ENCODE measurements at regions of chr11 and their contacts with region 1.

Region 1: GRCh38 chr11:85941380-85941973 is 86.3 kb downstream of the CCDC83 start:
- DNase-seq: peak in 1 of 2 donors; percentile 74
- H3K4me3 ChIP-seq: no peak overlapping the region
- H3K27ac ChIP-seq: no peak overlapping the region
- H3K4me1 ChIP-seq: peaks cover 0 to 3% of the 10 kb centered on the region in 2 donors
- H3K27me3 ChIP-seq: no peaks in the 10 kb centered on the region
- CTCF ChIP-seq: peak; percentile 67 to 73 (median 70)

Region 2: DNA sequence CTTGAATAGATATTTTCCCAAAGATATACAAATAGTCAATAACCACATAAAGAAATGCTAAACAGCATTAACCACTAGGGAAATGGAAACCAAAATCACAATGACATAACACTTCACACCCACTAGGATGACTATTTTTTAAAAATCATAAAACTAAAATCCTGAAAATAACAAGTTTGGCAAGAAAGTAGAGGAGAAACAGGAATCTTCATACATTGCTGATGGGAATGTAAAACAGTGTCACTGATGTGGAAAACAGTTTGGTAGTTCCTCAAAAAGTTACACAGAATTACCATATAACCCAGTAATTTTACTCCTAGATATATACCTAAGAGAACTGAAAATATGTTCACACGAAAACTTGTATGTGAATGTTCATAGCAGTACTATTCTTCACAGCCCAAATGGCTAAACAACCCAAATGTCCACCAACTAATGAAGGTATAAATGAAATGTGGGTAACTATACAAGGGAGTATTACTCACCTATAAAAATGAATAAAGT is 114.9 kb after region 1 on chr11:
- intact Hi-C with region 1: no loop called
- DNase-seq: no peak
- H3K4me3 ChIP-seq: no peak overlapping the region
- H3K27ac ChIP-seq: no peak overlapping the region
- H3K4me1 ChIP-seq: peaks cover 12 to 34% of the 10 kb centered on the region in 2 donors
- H3K27me3 ChIP-seq: no peaks in the 10 kb centered on the region
- CTCF ChIP-seq: no peak

Region 3: GRCh38 chr11:86202013-86202336 is 260.5 kb after region 1 on chr11:
- intact Hi-C with region 1: loop called (anchors 5 kb)
- DNase-seq: no peak
- H3K4me3 ChIP-seq: peak overlapping the region; percentile 36 to 57
- H3K27ac ChIP-seq: peak overlapping the region in 1 of 2 donors; percentile 41
- H3K4me1 ChIP-seq: no peaks in the 10 kb centered on the region
- H3K27me3 ChIP-seq: no peaks in the 10 kb centered on the region
- CTCF ChIP-seq: no peak

Region 4: DNA sequence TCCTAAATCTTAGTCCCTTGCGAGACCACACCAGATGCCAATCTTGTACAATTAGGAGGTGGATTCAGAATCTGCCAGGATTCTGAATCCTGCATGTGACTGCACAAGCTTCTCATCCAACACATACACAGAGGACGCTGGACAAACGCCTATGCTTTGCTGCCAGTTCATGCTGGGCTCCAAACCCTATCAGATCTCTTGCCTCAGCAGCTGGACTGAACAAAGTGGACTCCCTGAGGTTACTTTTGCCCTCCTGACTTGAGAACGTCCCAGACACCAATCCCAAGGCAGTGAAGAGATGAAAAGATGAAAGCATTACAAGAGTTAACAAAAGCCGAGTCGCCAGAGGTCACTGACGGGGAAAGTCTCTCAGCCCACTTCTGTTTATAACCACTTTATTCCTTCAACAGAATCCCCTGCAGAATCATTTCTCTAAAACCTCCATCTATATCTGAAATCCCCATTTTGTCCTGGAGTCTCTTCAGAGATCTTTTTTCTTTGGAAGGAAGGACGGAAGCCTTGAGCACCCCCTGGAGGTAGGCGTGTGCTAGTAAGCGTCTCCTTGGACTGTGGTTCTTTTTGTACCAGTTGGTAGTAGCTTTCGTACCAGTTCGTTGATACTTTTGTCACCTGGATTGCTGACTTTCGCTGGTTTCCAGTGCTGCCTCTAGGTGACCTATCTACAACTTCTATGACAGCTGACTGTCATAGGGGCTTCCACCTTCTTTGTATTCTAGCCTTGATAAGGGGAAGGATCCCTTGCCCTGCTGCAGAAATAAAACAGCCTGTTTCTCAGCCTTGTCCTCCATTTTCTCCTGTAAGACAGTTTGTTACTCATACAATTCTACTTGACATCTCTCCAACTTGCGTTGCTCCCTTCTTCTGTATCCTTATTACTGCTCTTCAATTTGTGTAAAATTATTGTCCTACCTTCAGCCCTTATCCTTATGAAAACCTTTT is 276.9 kb after region 1 on chr11:
- intact Hi-C with region 1: loop called (anchors 2 kb)
- DNase-seq: peak in 1 of 2 donors; percentile 77
- H3K4me3 ChIP-seq: peak overlapping the region; percentile 37 to 53
- H3K27ac ChIP-seq: peak overlapping the region; percentile 35 to 39
- H3K4me1 ChIP-seq: peaks cover 0 to 10% of the 10 kb centered on the region in 2 donors
- H3K27me3 ChIP-seq: no peaks in the 10 kb centered on the region
- CTCF ChIP-seq: peak; percentile 76 to 91 (median 91)

Region 5: DNA sequence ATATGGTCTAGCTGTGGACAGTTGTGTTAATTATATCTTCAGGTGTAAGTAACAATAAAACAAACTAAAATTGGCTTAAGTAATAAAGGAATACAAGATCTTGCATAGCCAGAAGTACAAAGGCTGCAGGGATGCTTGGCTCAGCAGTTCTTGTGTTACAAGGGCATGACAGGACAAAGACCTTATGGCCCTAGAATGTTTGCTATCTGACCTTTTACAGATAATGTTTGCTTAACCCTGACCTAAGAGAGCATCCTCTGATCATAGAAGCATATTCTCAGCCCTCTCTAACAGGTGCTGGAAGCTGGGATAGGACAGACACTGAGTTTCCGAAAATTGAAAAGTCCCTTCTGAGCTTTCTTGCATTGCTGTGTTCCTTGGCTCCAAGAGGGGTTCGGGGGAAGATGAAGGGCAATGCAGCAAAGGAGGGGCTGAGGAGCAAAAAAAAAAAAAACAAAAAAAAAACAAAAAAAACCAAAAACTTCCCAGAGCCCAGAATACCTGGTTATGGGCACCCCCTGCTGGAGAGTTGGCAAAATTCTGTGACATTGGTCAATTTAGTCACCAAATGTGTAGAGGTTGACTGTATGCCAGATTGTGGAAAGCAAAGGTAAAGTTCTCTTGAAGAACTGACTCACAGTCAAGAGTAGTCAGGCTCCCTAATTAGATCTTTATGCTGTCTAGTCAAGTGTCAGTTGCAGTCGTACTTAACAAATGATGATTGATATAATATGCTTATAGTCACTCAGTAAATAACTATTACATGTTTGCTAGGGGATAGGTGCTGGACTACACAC is 350.2 kb after region 1 on chr11:
- intact Hi-C with region 1: loop called (anchors 5 kb)
- DNase-seq: no peak
- H3K4me3 ChIP-seq: no peak overlapping the region
- H3K27ac ChIP-seq: no peak overlapping the region
- H3K4me1 ChIP-seq: no peaks in the 10 kb centered on the region
- H3K27me3 ChIP-seq: no peaks in the 10 kb centered on the region
- CTCF ChIP-seq: peak; percentile 38 to 62 (median 39)

Measured in ascending aorta (tissue), 2 donors.